ENCODE measurements at regions of chr14 and their contacts with region 1.

Region 1: GRCh38 chr14:21455911-21456667 is at the start of gene CHD8:
- DNase-seq: peak; percentile 97 to 100 (median 99)
- ATAC-seq: peak; percentile 96
- H3K4me3 ChIP-seq: peak within 1 kb of the TSS; percentile 91
- H3K4me3 Mint-ChIP-seq: peak within 1 kb of the TSS; percentile 95
- H3K27ac ChIP-seq: peak within 1 kb of the TSS; percentile 88 to 95
- H3K27ac Mint-ChIP-seq: peak within 1 kb of the TSS; percentile 100
- H3K4me1 ChIP-seq: peaks cover 45% of the 10 kb centered on the region
- H3K4me1 Mint-ChIP-seq: peaks cover 46% of the 10 kb centered on the region
- H3K27me3 ChIP-seq: no peaks in the 10 kb centered on the region
- H3K27me3 Mint-ChIP-seq: no peaks in the 10 kb centered on the region
- CTCF ChIP-seq: peak; percentile 71
- total RNA-seq, gene CHD8: 119 to 128 TPM

Region 2: GRCh38 chr14:21241218-21241819 is 214.8 kb before region 1 on chr14:
- CTCF ChIA-PET with region 1: no interaction called
- POLR2A ChIA-PET with region 1: no interaction called
- intact Hi-C with region 1: loop called in 1 of 2 experiments (anchors 5 kb)
- DNase-seq: peak in 3 of 14 experiments; percentile 55 to 67 (median 63)
- ATAC-seq: no peak
- H3K4me3 ChIP-seq: no peak overlapping the region
- H3K4me3 Mint-ChIP-seq: no peak overlapping the region
- H3K27ac ChIP-seq: no peak overlapping the region
- H3K27ac Mint-ChIP-seq: peak overlapping the region; percentile 11
- H3K4me1 ChIP-seq: peaks cover 45% of the 10 kb centered on the region
- H3K4me1 Mint-ChIP-seq: peaks cover 75% of the 10 kb centered on the region
- H3K27me3 ChIP-seq: no peaks in the 10 kb centered on the region
- H3K27me3 Mint-ChIP-seq: no peaks in the 10 kb centered on the region
- CTCF ChIP-seq: peak; percentile 66

Region 3: DNA sequence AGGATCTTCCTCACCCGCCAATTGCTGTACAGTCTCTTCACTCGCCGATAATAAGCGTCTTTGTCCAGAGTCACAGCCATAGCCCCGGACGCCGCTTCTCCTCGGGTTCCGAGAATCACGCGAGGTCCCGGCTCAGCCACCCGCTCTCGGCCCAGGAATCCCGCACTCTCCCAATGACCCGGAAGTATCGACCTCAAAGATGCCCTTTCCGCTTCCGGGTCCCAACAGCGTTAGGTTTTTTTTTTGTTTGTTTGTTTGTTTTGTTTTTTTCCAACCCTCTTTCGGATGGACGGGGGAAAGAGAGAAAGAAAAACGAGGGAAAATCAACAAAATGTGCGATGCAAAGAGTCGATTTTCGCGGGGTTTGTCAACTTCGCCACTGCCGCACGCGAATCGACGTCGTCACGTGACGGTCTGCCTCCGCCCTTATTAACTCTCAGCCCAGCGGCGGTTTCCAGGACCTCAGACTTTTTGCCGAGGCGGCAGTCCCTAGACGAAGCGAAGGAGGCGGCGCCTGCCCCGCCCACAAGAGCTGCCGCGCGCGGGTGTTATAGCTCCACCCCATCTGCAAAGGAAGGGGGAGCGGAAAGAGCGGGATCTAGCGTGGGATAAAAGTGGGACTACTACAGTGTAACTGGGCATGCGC is 72.1 kb before region 1 on chr14 and contains the start of gene SUPT16H:
- CTCF ChIA-PET with region 1: no interaction called
- POLR2A ChIA-PET with region 1: interaction called, 10 read pairs
- intact Hi-C with region 1: loop called (anchors 2 to 5 kb)
- DNase-seq: peak; percentile 84 to 97 (median 91)
- ATAC-seq: peak; percentile 91
- H3K4me3 ChIP-seq: peak within 1 kb of the TSS; percentile 82
- H3K4me3 Mint-ChIP-seq: peak within 1 kb of the TSS; percentile 98
- H3K27ac ChIP-seq: peak within 1 kb of the TSS; percentile 83 to 92
- H3K27ac Mint-ChIP-seq: peak within 1 kb of the TSS; percentile 99
- H3K4me1 ChIP-seq: peaks cover 18% of the 10 kb centered on the region
- H3K4me1 Mint-ChIP-seq: peaks cover 47% of the 10 kb centered on the region
- H3K27me3 ChIP-seq: no peaks in the 10 kb centered on the region
- H3K27me3 Mint-ChIP-seq: no peaks in the 10 kb centered on the region
- CTCF ChIP-seq: no peak
- total RNA-seq, gene SUPT16H: 47.8 to 50.8 TPM

Region 4: DNA sequence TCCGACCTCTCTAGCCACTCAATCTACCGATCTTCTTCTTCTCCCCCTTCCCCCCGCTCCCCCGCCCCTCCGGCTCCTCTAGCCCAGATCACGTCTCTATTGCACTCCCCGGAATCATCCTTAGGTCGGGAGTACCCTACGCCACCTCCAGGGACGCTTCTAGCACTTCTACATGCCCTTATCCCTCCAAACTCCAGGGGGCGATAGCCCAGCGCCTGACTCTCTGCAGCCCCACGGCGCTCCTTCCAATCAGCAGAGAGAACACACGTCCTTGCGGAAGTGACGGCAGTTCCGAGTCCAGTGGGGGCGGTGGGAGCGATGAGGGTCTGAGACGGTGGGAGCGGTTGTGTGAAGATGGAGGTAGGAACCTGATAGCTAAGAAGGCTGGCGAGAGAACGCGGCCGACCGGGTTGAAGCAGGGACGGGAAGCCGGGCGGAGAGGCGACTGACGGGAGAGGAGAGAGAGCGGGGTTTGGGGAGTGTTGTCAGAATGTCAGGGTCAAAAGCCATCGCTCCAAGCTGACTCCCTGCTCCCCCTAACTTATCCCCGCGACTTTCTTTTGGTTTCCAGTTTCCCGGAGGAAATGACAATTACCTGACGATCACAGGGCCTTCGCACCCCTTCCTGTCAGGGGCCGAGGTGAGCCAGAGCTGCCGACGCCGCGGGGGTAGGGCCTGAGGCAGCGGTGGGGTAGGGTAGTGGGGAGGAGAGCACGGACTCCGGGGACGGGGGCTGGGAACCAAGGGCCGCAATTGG is 21.0 kb after region 1 on chr14 and contains the starts of genes RAB2B and TOX4:
- CTCF ChIA-PET with region 1: interaction called, 45 read pairs
- POLR2A ChIA-PET with region 1: interaction called, 44 read pairs
- intact Hi-C with region 1: loop called (anchors 1 kb)
- DNase-seq: peak; percentile 90 to 99 (median 92)
- ATAC-seq: peak; percentile 96
- H3K4me3 ChIP-seq: peak within 1 kb of the TSS; percentile 99
- H3K4me3 Mint-ChIP-seq: peak within 1 kb of the TSS; percentile 99
- H3K27ac ChIP-seq: peak within 1 kb of the TSS; percentile 73 to 94
- H3K27ac Mint-ChIP-seq: peak within 1 kb of the TSS; percentile 94
- H3K4me1 ChIP-seq: peaks cover 20% of the 10 kb centered on the region
- H3K4me1 Mint-ChIP-seq: peaks cover 48% of the 10 kb centered on the region
- H3K27me3 ChIP-seq: no peaks in the 10 kb centered on the region
- H3K27me3 Mint-ChIP-seq: no peaks in the 10 kb centered on the region
- CTCF ChIP-seq: peak; percentile 95
- total RNA-seq, gene RAB2B: 21.1 to 23.9 TPM
- total RNA-seq, gene TOX4: 70.9 to 77.4 TPM

Region 5: DNA sequence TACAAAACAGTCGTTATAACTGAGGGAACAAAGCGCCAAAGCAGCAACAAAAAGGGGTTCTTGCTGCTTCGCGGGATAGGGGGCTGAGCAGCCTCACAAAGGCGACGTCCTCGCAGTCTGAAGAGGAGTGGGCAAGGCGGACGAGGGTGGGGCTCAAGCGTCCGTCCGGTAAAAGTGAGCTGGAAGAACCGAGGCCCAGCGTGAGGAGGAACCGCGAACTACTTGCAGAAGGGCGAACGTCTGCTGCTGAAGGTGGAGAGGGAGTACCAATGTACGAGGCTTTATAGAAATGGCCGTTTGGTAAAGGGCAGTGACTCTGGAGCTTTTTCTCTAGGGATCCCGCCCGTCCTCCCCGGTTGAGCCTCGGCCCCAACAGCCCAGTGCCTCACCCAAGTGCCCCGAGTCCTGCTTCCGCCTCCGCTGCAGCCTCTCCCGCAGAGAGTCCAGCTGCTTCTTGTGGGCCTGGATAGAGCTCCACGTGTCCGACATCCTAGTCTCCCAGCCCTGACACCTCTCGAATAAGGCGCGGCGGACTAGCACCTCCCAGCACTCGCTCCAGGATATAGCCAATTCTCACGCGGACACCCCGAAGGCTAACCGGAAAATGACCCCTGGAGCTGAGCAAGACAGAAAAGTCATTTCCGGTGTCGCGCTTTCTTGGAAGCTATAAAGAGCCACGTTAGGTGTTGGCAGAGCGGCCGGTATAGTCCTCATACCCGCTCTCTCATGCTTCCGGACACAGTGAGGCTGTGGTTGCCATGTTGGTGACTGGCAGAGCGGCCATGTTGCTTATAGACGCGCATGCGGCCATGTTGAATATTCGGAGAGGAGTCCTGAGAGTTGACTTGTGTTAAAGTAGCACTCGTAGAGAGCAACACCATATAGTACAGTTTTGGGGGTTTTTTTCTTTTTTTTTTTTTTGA is 54.9 kb after region 1 on chr14 and contains the start of gene METTL3:
- CTCF ChIA-PET with region 1: interaction called, 20 read pairs
- POLR2A ChIA-PET with region 1: interaction called, 28 read pairs
- intact Hi-C with region 1: loop called in 1 of 2 experiments (anchors 1 kb)
- DNase-seq: peak; percentile 88 to 98 (median 90)
- ATAC-seq: peak; percentile 99
- H3K4me3 ChIP-seq: peak within 1 kb of the TSS; percentile 83
- H3K4me3 Mint-ChIP-seq: peak within 1 kb of the TSS; percentile 98
- H3K27ac ChIP-seq: peak within 1 kb of the TSS; percentile 82 to 84
- H3K27ac Mint-ChIP-seq: peak within 1 kb of the TSS; percentile 98
- H3K4me1 ChIP-seq: peaks cover 30% of the 10 kb centered on the region
- H3K4me1 Mint-ChIP-seq: peaks cover 45% of the 10 kb centered on the region
- H3K27me3 ChIP-seq: no peaks in the 10 kb centered on the region
- H3K27me3 Mint-ChIP-seq: no peaks in the 10 kb centered on the region
- CTCF ChIP-seq: no peak
- total RNA-seq, gene METTL3: 31.9 to 34.5 TPM

Region 6: GRCh38 chr14:21536418-21537089 is 80.5 kb after region 1 on chr14:
- CTCF ChIA-PET with region 1: no interaction called
- POLR2A ChIA-PET with region 1: no interaction called
- intact Hi-C with region 1: no loop called
- DNase-seq: no peak
- ATAC-seq: no peak
- H3K4me3 ChIP-seq: no peak overlapping the region
- H3K4me3 Mint-ChIP-seq: peak overlapping the region; percentile 21
- H3K27ac ChIP-seq: no peak overlapping the region
- H3K27ac Mint-ChIP-seq: no peak overlapping the region
- H3K4me1 ChIP-seq: peaks cover 8% of the 10 kb centered on the region
- H3K4me1 Mint-ChIP-seq: no peaks in the 10 kb centered on the region
- H3K27me3 ChIP-seq: peaks cover 39 to 51% of the 10 kb centered on the region in 2 experiments
- H3K27me3 Mint-ChIP-seq: peaks cover 62% of the 10 kb centered on the region
- CTCF ChIP-seq: no peak

Region 7: GRCh38 chr14:21557084-21557901 is 101.2 kb after region 1 on chr14:
- CTCF ChIA-PET with region 1: no interaction called
- POLR2A ChIA-PET with region 1: no interaction called
- intact Hi-C with region 1: loop called in 1 of 2 experiments (anchors 1 kb)
- DNase-seq: peak; percentile 40 to 91 (median 70)
- ATAC-seq: peak; percentile 70
- H3K4me3 ChIP-seq: peak overlapping the region; percentile 36
- H3K4me3 Mint-ChIP-seq: no peak overlapping the region
- H3K27ac ChIP-seq: no peak overlapping the region
- H3K27ac Mint-ChIP-seq: no peak overlapping the region
- H3K4me1 ChIP-seq: peaks cover 4% of the 10 kb centered on the region
- H3K4me1 Mint-ChIP-seq: peaks cover 6% of the 10 kb centered on the region
- H3K27me3 ChIP-seq: no peaks in the 10 kb centered on the region
- H3K27me3 Mint-ChIP-seq: no peaks in the 10 kb centered on the region
- CTCF ChIP-seq: peak; percentile 80

Region 8: DNA sequence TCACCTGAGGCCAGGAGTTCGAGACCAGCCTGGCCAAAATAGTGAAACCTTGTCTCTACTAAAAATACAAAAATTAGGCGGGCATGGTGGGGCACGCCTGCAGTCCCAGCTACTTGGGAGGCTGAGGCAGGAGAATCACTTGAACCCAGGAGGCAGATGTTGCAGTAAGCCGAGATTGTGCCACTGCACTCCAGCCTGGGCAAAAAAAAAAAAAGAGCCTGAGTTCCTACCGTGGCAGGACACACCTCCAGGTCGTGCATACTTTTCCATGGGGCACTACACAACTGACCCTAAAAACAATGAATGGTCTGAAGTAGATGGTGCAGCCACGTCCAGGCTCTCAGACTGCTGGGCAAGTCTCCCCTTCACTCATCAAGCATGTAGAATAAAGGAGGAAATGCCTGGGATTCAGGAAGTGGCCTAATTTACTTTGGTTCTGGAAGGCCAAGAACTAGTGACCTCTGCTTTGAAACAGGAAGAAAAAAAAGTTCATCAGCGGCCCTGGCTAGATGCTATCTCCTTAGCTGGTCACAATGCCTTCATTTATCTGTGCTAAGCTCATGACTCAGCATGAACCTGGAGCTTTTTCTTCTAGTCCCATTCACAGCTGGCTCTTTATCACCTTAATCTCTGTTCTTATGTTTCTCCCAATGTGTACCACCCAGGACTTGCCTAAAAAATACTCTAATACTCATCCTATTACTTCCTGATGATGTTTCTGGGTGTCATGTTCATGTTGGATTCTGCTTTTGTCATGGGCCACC is 1243.9 kb after region 1 on chr14:
- CTCF ChIA-PET with region 1: no interaction called
- POLR2A ChIA-PET with region 1: no interaction called
- intact Hi-C with region 1: no loop called
- DNase-seq: no peak
- ATAC-seq: no peak
- H3K4me3 ChIP-seq: no peak overlapping the region
- H3K4me3 Mint-ChIP-seq: no peak overlapping the region
- H3K27ac ChIP-seq: no peak overlapping the region
- H3K27ac Mint-ChIP-seq: no peak overlapping the region
- H3K4me1 ChIP-seq: no peaks in the 10 kb centered on the region
- H3K4me1 Mint-ChIP-seq: no peaks in the 10 kb centered on the region
- H3K27me3 ChIP-seq: peaks cover 13 to 34% of the 10 kb centered on the region in 2 experiments
- H3K27me3 Mint-ChIP-seq: peaks cover 53% of the 10 kb centered on the region
- CTCF ChIP-seq: no peak

Measured in CD4-positive, alpha-beta T cell (primary cell).